Psoas muscle (tissue), 8 donors: ENCODE measurements at regions of chr7 and their contacts with region 1.

Region 1: DNA sequence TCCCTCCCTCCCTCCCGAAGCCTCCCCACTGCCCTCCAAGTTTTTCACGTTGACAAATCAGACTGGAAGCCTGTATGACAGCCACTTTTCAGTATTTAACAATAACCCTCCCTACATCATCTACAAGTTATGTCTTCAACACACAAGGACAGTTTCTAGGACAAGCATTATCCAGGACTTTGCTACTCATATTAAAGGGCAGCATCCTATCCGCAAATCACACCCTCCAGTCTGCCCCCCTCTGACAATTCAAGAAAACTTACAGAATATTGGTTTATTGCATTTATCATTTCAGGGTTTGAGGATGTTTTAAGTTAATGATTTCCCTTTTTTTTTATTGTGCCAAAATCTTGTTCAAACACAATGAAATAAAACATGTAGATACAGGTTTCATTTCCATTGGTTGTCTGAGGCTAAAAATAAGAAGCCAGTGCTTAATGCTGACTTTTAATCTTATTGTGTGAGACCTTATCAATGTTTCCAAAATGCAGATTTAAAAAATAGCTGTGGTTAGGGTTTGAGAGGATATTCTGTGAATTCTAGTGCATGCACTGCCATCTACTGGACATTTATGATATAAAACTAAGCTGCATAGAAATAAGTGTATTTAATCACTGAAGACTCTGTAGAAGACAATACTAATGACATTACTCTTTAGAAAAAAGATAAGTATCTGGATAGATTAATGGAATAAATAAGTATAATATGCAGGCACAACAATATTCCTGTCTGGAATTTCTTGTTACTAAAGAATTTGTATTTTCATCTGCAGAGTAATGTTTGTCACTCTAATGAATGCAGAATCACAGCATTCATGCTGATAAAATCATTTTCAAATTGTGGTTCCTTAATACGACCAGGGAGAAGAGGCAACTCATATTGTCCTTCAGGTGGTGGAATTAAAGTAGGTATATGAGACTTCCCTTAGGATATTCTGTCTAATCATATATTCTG is 64.1 kb downstream of the CAV1 start:
- DNase-seq: no peak
- ATAC-seq: peak in 3 of 4 donors; percentile 36 to 69 (median 57)
- H3K4me3 ChIP-seq: no peak overlapping the region
- H3K27ac ChIP-seq: no peak overlapping the region
- H3K4me1 ChIP-seq: peaks cover 10% of the 10 kb centered on the region
- H3K27me3 ChIP-seq: no peaks in the 10 kb centered on the region
- CTCF ChIP-seq: peak; percentile 78

Region 2: GRCh38 chr7:116173051-116174028 is 415.6 kb before region 1 on chr7:
- intact Hi-C with region 1: loop called in 1 of 2 experiments (anchors 5 kb)
- DNase-seq: no peak
- ATAC-seq: peak in 1 of 4 donors; percentile 57
- H3K4me3 ChIP-seq: no peak overlapping the region
- H3K27ac ChIP-seq: no peak overlapping the region
- H3K4me1 ChIP-seq: no peaks in the 10 kb centered on the region
- H3K27me3 ChIP-seq: no peaks in the 10 kb centered on the region
- CTCF ChIP-seq: peak; percentile 61

Region 3: GRCh38 chr7:116258734-116259133 is 330.2 kb before region 1 on chr7:
- intact Hi-C with region 1: loop called (anchors 2 kb)
- DNase-seq: no peak
- ATAC-seq: peak; percentile 57 to 89 (median 70)
- H3K4me3 ChIP-seq: no peak overlapping the region
- H3K27ac ChIP-seq: no peak overlapping the region
- H3K4me1 ChIP-seq: peaks cover 6% of the 10 kb centered on the region
- H3K27me3 ChIP-seq: no peaks in the 10 kb centered on the region
- CTCF ChIP-seq: peak; percentile 91

Region 4: DNA sequence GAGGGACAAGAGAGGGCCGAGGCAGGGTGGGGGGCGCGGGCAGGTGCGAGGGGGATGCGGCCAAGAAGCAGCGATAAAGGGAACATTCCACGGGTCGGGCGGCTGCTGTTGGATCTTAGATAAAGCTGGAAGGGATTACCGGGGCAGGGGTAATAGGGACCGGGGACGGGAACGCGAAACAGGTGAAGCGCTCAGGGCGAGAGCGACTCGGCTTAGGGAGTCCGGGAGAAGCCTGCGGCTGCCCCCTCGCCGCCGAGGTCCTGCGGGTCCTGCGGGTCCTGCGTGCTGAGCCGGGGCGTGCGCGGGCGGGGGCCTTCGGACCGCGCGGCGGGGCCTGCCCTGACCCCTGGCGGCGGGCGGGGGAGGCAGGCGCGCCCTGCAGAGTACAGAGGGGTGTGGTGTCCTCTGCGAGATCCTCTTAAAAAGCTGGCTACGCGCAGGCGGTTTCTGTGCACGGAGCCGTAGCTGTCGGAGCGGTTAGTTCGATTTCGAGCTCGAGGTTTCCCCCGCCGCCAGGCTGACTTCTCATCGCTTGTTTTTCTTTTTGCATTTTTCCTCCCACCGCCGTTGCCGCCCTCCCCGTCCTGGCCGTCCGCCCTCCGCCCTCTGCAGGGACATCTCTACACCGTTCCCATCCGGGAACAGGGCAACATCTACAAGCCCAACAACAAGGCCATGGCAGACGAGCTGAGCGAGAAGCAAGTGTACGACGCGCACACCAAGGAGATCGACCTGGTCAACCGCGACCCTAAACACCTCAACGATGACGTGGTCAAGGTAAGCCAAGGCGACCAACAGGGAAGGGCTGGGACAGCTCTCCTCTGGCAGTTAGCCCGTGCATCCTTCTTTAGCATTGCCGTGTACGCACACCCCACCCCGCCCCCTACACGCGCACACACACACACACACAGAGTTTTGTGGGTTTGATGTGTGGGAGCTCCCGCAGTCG is 62.7 kb before region 1 on chr7:
- intact Hi-C with region 1: loop called (anchors 5 kb)
- DNase-seq: peak; percentile 81 to 84
- ATAC-seq: peak; percentile 91 to 92 (median 92)
- H3K4me3 ChIP-seq: peak overlapping the region; percentile 80
- H3K27ac ChIP-seq: peak overlapping the region; percentile 77
- H3K4me1 ChIP-seq: no peaks in the 10 kb centered on the region
- H3K27me3 ChIP-seq: no peaks in the 10 kb centered on the region
- CTCF ChIP-seq: peak; percentile 89

Region 5: DNA sequence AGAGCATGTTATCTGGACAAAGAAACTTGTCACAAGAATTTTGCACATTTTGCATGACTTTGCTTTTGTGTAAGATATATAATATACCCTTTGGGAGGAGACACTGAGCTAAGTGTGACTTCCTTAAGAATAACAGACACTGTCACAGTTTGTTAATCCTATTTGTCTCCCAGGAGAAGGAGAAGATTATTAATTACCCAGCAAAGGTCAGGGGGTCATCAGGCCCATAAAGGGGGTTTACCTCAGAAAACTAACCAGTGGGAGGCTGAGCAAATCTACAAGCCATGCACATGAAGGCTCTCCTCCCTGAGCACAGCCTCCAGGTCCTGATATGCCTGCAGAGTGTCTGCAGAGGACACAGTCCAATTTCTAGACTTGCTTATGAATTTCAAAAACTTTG is 72.9 kb after region 1 on chr7:
- intact Hi-C with region 1: loop called in 1 of 2 experiments (anchors 5 kb)
- DNase-seq: no peak
- ATAC-seq: no peak
- H3K4me3 ChIP-seq: no peak overlapping the region
- H3K27ac ChIP-seq: no peak overlapping the region
- H3K4me1 ChIP-seq: peaks cover 6% of the 10 kb centered on the region
- H3K27me3 ChIP-seq: no peaks in the 10 kb centered on the region
- CTCF ChIP-seq: no peak

Region 6: DNA sequence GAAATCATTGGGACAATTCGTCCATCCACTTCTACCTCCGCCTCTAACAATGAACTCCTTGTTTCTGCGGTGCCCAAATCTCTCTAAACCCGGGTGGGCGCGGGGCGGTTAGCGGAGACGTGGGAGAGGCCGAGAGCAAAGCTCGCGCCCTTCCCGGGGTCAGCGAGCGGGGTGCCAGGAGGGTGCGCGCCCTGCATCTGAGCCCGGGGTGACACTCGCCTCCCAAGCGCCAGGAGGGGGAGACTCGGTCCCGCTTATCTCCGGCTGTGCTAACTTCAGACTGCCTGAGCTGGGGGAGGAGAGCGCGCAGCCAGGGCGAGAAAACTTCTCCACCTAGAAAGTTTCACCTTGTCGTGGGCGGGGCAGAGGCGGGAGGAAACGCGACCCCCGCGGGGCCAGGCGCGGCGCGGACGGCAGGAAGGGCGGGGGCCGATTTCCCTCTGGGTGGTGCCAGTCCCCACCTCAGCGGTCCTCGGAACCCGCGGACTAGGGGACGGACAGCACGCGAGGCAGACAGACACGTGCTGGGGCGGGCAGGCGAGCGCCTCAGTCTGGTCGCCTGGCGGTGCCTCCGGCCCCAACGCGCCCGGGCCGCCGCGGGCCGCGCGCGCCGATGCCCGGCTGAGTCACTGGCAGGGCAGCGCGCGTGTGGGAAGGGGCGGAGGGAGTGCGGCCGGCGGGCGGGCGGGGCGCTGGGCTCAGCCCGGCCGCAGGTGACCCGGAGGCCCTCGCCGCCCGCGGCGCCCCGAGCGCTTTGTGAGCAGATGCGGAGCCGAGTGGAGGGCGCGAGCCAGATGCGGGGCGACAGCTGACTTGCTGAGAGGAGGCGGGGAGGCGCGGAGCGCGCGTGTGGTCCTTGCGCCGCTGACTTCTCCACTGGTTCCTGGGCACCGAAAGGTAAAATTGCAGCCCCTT is 83.0 kb after region 1 on chr7 and contains the start of gene MET:
- intact Hi-C with region 1: loop called in 1 of 2 experiments (anchors 2 kb)
- DNase-seq: peak; percentile 83 to 91
- ATAC-seq: peak; percentile 87 to 95 (median 90)
- H3K4me3 ChIP-seq: peak within 1 kb of the TSS; percentile 81
- H3K27ac ChIP-seq: peak within 1 kb of the TSS; percentile 93
- H3K4me1 ChIP-seq: peaks cover 33% of the 10 kb centered on the region
- H3K27me3 ChIP-seq: no peaks in the 10 kb centered on the region
- CTCF ChIP-seq: peak; percentile 57
- total RNA-seq, gene MET: 17.8 to 84.1 (median 29.3) TPM